Panc1 (cell line): ENCODE measurements at regions of chr11 and their contacts with region 1.

Region 1: GRCh38 chr11:46006418-46007070 is 84.1 kb downstream of the LARGE2 start:
- DNase-seq: peak; percentile 59
- ATAC-seq: peak; percentile 93
- H3K4me3 ChIP-seq: no peak overlapping the region
- H3K27ac ChIP-seq: no peak overlapping the region
- H3K4me1 ChIP-seq: no peaks in the 10 kb centered on the region; the same call in 1 of the 2 replicates
- H3K27me3 ChIP-seq: no peaks in the 10 kb centered on the region
- CTCF ChIP-seq: peak; percentile 79; the same call in 1 of the 2 replicates

Region 2: DNA sequence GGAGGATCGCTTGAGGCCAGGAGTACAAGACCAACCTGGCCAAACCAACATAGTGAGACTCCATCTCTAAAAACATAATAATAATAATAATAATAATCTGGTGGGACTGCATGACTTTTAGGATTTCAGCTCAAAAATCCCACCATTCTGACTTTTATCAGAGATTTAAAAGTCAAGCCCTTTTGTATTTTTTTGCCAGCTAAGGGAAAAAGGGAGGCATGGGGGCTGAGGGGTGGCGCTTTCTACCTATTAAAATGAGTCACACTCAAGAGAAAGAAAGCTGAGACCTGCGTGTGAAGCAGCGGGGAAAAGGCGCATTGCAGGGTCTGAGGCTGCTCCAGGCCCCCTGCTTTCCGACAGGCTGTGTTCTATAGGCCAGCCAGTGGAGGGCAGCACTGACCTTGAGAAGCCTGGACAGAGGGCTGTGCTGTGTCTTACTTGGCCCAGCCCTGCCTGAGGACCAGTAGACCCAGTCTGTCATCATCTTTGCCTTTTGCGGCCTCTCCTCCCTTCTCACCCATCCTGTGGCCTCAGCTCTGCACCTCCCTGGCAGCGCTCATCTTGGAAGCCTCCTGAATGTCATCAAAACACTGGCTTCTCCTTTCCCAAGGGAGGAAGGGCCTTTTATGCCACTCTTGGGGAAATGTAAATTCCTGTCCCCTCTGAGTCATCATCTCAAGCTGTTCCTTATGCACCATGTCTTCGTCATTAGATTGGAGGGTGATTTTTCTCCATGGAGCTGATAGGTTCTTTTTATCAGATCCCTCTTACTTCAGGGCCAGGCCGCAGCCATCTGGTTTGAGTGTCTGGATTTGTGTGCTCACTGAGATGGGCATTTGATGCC is 133.8 kb before region 1 on chr11:
- CTCF ChIA-PET with region 1: no interaction called
- POLR2A ChIA-PET with region 1: no interaction called
- in situ Hi-C with region 1: no loop called
- intact Hi-C with region 1: loop called (anchors 10 kb)
- DNase-seq: no peak
- ATAC-seq: peak; percentile 87
- H3K4me3 ChIP-seq: no peak overlapping the region
- H3K27ac ChIP-seq: no peak overlapping the region
- H3K4me1 ChIP-seq: no peaks in the 10 kb centered on the region
- H3K27me3 ChIP-seq: no peaks in the 10 kb centered on the region
- CTCF ChIP-seq: peak; percentile 79

Region 3: DNA sequence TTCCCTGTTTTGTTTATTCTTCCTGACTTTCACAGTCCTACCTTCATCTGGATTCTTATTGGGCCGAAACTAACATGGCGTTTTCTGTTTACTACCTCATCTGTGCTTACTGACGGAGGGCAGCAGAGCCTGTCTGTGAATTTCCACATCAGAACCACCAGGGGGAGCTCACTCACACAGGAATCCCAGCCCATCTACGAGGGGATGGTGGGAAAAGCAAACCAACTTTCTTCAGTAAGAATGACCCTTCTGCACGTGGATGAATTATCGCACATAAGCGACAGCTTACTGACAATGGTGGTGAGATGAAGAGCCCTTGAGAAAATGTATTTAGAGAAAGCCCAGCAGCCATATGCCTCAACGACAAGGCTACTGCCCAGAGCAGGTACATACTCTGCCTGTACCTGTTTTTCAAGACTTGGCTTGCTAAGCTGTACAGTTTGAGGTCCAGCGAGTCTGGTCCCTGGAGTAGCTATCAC is 41.6 kb before region 1 on chr11:
- CTCF ChIA-PET with region 1: interaction called, 20 read pairs
- POLR2A ChIA-PET with region 1: no interaction called
- in situ Hi-C with region 1: no loop called
- intact Hi-C with region 1: loop called (anchors 1 kb)
- DNase-seq: peak; percentile 63
- ATAC-seq: peak; percentile 98
- H3K4me3 ChIP-seq: no peak overlapping the region
- H3K27ac ChIP-seq: no peak overlapping the region
- H3K4me1 ChIP-seq: no peaks in the 10 kb centered on the region
- H3K27me3 ChIP-seq: no peaks in the 10 kb centered on the region
- CTCF ChIP-seq: peak; percentile 95

Region 4: DNA sequence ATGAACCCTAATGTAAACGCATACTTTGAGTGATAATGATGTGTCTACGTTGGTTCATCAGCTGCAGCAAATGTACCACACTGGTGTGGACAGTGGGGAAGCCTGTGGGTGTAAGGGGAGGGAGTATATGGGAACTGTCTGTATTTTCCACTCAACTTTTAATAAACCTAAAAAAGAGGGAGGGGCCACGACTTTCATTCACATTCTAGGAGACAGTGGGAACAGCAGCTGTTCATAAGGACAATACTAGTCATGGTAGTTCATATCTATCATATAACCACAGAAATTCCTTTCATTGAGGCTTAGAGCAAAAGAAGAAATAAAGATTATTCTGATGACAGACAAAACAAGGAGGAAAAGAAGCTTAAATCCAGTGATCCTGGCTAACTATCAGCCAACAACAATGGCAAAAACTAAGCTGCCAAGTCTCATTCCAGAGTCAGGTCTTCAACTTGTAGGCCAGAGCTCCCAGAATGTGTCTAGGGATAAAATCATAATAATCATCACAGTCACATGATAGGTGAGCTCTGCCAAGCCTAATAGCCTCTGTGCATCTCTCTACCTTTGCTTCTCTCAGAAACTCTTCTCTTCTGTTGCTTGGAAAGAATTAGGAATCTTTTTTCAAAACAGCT is 444.4 kb after region 1 on chr11:
- CTCF ChIA-PET with region 1: no interaction called
- POLR2A ChIA-PET with region 1: no interaction called
- in situ Hi-C with region 1: no loop called
- intact Hi-C with region 1: no loop called
- DNase-seq: no peak
- ATAC-seq: no peak
- H3K4me3 ChIP-seq: no peak overlapping the region
- H3K27ac ChIP-seq: no peak overlapping the region
- H3K4me1 ChIP-seq: no peaks in the 10 kb centered on the region; the same call in 1 of the 2 replicates
- H3K27me3 ChIP-seq: no peaks in the 10 kb centered on the region
- CTCF ChIP-seq: no peak